Psoas muscle (tissue), 8 donors: ENCODE measurements at regions of chr3 and their contacts with region 1.

Region 1: GRCh38 chr3:179322286-179323196 is at the start of gene ZNF639:
- DNase-seq: peak; percentile 90 to 92
- ATAC-seq: peak; percentile 91 to 96 (median 94)
- H3K4me3 ChIP-seq: peak within 1 kb of the TSS; percentile 99
- H3K27ac ChIP-seq: peak within 1 kb of the TSS; percentile 94
- H3K4me1 ChIP-seq: peaks cover 13% of the 10 kb centered on the region
- H3K27me3 ChIP-seq: no peaks in the 10 kb centered on the region
- CTCF ChIP-seq: peak; percentile 87
- total RNA-seq, gene ZNF639: 22.9 to 30.7 (median 27.9) TPM

Region 2: GRCh38 chr3:179015551-179016020 is 307.0 kb before region 1 on chr3:
- intact Hi-C with region 1: loop called (anchors 2 to 5 kb)
- DNase-seq: no peak
- ATAC-seq: peak; percentile 61 to 87 (median 80)
- H3K4me3 ChIP-seq: no peak overlapping the region
- H3K27ac ChIP-seq: no peak overlapping the region
- H3K4me1 ChIP-seq: no peaks in the 10 kb centered on the region
- H3K27me3 ChIP-seq: no peaks in the 10 kb centered on the region
- CTCF ChIP-seq: peak; percentile 87

Region 3: DNA sequence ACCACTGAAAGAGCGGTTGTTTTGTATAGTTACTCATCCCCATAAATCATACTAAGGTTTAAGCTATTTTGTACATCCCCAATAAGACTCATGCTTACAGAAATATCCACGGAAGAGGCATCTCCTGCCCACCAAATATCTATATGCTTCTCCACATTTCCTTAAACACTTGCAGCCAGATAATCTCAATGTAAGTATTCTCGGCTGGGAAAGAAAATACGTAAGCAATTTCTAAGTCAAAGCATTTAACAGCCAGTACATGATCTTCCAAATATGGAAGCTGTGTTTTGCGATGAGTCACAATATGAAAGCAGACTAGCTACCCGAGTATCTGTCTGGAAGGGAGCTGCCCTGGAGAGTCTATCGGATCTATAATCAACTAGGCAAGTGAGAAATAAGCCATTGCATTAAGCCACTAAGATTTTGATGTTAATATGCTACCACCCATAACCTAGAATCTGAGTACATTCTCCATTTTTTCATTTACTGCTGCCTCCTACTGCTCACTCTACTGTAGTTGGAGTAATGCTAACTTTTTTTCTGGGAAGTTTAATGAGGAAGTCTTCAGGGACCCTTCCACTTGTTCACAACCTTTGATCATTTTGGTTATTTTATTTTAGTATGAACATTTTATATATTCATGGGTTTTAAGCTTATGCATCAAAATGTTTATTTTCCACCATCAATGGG is 224.0 kb before region 1 on chr3:
- intact Hi-C with region 1: loop called in 1 of 2 experiments (anchors 2 kb)
- DNase-seq: no peak
- ATAC-seq: no peak
- H3K4me3 ChIP-seq: no peak overlapping the region
- H3K27ac ChIP-seq: no peak overlapping the region
- H3K4me1 ChIP-seq: no peaks in the 10 kb centered on the region
- H3K27me3 ChIP-seq: peaks cover 0 to 2% (median 0%) of the 10 kb centered on the region in 3 donors
- CTCF ChIP-seq: no peak

Region 4: GRCh38 chr3:179156170-179156569 is 166.4 kb before region 1 on chr3:
- intact Hi-C with region 1: no loop called
- DNase-seq: no peak
- ATAC-seq: peak; percentile 84 to 99 (median 93)
- H3K4me3 ChIP-seq: no peak overlapping the region
- H3K27ac ChIP-seq: peak overlapping the region; percentile 41
- H3K4me1 ChIP-seq: peaks cover 67% of the 10 kb centered on the region
- H3K27me3 ChIP-seq: no peaks in the 10 kb centered on the region
- CTCF ChIP-seq: no peak

Region 5: DNA sequence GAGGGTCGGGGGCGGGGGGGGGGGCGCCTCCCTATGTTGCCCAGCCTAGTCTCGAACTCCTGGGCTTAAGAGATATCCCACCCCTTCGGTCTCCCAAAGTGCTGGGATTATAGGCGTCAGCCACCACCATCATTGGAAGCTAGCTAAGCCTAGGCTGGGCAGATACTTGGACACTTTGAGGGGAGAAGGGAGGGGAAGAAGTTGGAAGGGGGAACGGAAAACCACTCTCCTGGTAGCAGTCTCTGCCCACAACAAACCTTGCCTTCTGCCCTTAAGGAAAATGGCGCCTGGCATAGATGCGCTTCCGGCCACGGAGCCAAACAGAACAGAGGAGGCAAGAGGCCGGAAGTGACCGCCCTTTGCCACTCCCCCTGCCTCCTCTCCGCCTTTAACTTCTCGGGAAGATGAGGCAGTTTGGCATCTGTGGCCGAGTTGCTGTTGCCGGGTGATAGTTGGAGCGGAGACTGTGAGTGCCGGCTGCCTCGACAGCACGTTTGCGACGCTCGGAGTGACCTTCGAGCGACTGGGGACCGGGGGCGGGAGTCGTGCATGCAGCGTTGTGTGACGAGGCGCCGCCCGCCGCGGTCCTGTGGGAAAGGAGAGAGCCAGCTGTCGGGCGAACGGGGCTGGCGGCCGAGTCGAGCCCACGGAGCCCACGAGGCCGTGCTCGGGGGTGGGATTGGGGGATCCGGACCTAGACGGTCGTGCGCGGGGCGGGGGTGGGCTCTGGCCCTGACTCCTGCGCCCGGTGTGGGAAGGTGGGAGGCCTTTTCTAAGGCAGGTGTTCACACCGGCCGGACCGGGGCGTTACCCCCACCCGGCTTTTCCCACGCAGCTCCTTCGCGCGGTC is 25.0 kb after region 1 on chr3 and contains the start of gene MFN1:
- intact Hi-C with region 1: loop called in 1 of 2 experiments (anchors 2 kb)
- DNase-seq: peak; percentile 94 to 97
- ATAC-seq: peak; percentile 99 to 100 (median 99)
- H3K4me3 ChIP-seq: peak within 1 kb of the TSS; percentile 74
- H3K27ac ChIP-seq: peak within 1 kb of the TSS; percentile 88
- H3K4me1 ChIP-seq: peaks cover 7% of the 10 kb centered on the region
- H3K27me3 ChIP-seq: no peaks in the 10 kb centered on the region
- CTCF ChIP-seq: no peak
- total RNA-seq, gene MFN1: 23.8 to 42.9 (median 36.3) TPM

Region 6: GRCh38 chr3:179493260-179493659 is 170.7 kb after region 1 on chr3:
- intact Hi-C with region 1: no loop called
- DNase-seq: no peak
- ATAC-seq: no peak
- H3K4me3 ChIP-seq: no peak overlapping the region
- H3K27ac ChIP-seq: no peak overlapping the region
- H3K4me1 ChIP-seq: no peaks in the 10 kb centered on the region
- H3K27me3 ChIP-seq: no peaks in the 10 kb centered on the region
- CTCF ChIP-seq: no peak